Activated CD4-positive, alpha-beta T cell treated with anti-CD3 and anti-CD28 coated beads for 36 hours (primary cell): ENCODE measurements at regions of chr9 and their contacts with region 1.

Region 1: DNA sequence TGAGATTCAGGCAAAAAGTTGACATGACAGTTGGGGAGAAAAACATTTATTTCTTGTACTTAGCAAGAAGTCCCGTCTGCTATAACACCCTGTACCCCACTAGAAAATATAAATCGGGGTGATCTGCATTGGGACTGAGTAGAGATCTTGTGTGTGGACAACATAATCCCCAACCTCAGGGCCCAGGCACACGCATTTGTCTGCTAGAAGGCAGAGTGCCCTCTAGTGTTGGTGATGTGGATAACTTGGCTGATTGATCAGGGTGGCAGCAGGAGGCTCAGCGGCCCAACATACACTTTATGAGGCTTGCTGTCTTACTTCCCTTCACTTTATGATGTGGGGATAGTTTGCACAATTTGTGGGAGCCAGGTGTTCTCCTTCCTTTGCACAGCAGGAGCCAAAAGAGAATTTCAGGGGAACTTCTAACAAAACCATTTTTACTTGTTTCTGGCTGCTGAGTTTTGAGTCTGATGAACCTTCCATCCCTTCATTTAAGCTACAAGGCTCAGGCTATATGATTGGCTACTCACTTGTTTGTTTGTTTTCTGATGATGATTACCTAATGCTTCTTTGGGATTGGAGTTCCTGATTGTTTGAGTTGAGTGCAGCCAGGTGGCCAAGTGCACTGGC is 263.2 kb downstream of the DMAC1 start:
- DNase-seq: peak; percentile 69
- ATAC-seq: no peak
- H3K4me3 Mint-ChIP-seq: no peak overlapping the region
- H3K27ac Mint-ChIP-seq: no peak overlapping the region
- H3K4me1 Mint-ChIP-seq: peaks cover 14% of the 10 kb centered on the region
- H3K27me3 Mint-ChIP-seq: peaks cover 14% of the 10 kb centered on the region

Region 2: GRCh38 chr9:6827439-6827838 is 709.0 kb before region 1 on chr9:
- CTCF ChIA-PET with region 1: interaction called, 3 read pairs
- POLR2A ChIA-PET with region 1: no interaction called
- intact Hi-C with region 1: loop called in 1 of 2 experiments (anchors 2 kb)
- DNase-seq: peak; percentile 54
- ATAC-seq: peak; percentile 79
- H3K4me3 Mint-ChIP-seq: no peak overlapping the region
- H3K27ac Mint-ChIP-seq: peak overlapping the region; percentile 62
- H3K4me1 Mint-ChIP-seq: peaks cover 9% of the 10 kb centered on the region
- H3K27me3 Mint-ChIP-seq: no peaks in the 10 kb centered on the region

Region 3: GRCh38 chr9:6907772-6908381 is 628.5 kb before region 1 on chr9:
- CTCF ChIA-PET with region 1: no interaction called
- POLR2A ChIA-PET with region 1: no interaction called
- intact Hi-C with region 1: loop called in 1 of 2 experiments (anchors 10 kb)
- DNase-seq: no peak
- ATAC-seq: no peak
- H3K4me3 Mint-ChIP-seq: no peak overlapping the region
- H3K27ac Mint-ChIP-seq: no peak overlapping the region
- H3K4me1 Mint-ChIP-seq: peaks cover 4% of the 10 kb centered on the region
- H3K27me3 Mint-ChIP-seq: no peaks in the 10 kb centered on the region

Region 4: GRCh38 chr9:7055201-7055903 is 481.1 kb before region 1 on chr9:
- CTCF ChIA-PET with region 1: no interaction called
- POLR2A ChIA-PET with region 1: no interaction called
- intact Hi-C with region 1: loop called (anchors 1 to 5 kb)
- DNase-seq: no peak
- ATAC-seq: peak; percentile 30
- H3K4me3 Mint-ChIP-seq: no peak overlapping the region
- H3K27ac Mint-ChIP-seq: no peak overlapping the region
- H3K4me1 Mint-ChIP-seq: peaks cover 11% of the 10 kb centered on the region
- H3K27me3 Mint-ChIP-seq: no peaks in the 10 kb centered on the region

Region 5: GRCh38 chr9:7234143-7234542 is 302.3 kb before region 1 on chr9:
- CTCF ChIA-PET with region 1: interaction called, 3 read pairs
- POLR2A ChIA-PET with region 1: no interaction called
- intact Hi-C with region 1: loop called in 1 of 2 experiments (anchors 1 kb)
- DNase-seq: peak; percentile 76
- ATAC-seq: peak; percentile 96
- H3K4me3 Mint-ChIP-seq: no peak overlapping the region
- H3K27ac Mint-ChIP-seq: no peak overlapping the region
- H3K4me1 Mint-ChIP-seq: no peaks in the 10 kb centered on the region
- H3K27me3 Mint-ChIP-seq: peaks cover 12% of the 10 kb centered on the region

Region 6: GRCh38 chr9:7298123-7298522 is 238.3 kb before region 1 on chr9:
- CTCF ChIA-PET with region 1: no interaction called
- POLR2A ChIA-PET with region 1: no interaction called
- intact Hi-C with region 1: loop called (anchors 5 to 10 kb)
- DNase-seq: peak; percentile 76
- ATAC-seq: peak; percentile 95
- H3K4me3 Mint-ChIP-seq: no peak overlapping the region
- H3K27ac Mint-ChIP-seq: peak overlapping the region; percentile 7
- H3K4me1 Mint-ChIP-seq: peaks cover 20% of the 10 kb centered on the region
- H3K27me3 Mint-ChIP-seq: peaks cover 29% of the 10 kb centered on the region

Region 7: DNA sequence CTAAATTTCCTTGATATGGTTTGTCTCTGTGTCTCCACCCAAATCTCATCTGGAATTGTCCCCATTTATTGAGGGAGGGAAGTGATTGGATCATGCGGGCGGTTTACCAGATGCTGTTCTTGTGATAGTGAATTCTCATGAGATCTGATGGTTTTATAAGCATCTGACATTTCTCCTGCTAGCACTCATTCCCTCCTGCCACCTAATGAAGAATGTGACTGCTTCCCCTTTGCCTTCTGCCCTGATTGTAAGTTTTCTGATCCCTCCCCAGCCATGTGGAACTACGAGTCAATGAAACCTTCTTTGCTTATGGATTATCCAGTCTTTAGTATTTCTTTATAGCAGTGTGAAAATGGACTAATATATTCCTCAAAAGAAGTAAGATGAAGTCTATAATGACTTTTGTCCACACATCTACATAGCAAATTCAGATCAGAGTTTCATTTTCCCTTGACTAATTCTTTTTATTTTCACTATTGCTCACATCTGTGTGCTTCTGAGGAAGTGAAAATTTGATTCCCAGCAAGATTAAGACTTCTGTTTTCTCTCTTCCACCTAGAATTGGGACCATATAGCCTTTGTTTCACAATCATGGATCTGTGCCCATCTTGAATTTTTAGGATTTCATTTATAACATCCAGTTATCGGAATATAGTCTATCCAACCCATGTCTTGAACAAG is 130.4 kb before region 1 on chr9:
- CTCF ChIA-PET with region 1: interaction called, 12 read pairs
- POLR2A ChIA-PET with region 1: no interaction called
- intact Hi-C with region 1: loop called (anchors 1 to 5 kb)
- DNase-seq: no peak
- ATAC-seq: peak; percentile 39
- H3K4me3 Mint-ChIP-seq: no peak overlapping the region
- H3K27ac Mint-ChIP-seq: no peak overlapping the region
- H3K4me1 Mint-ChIP-seq: peaks cover 8% of the 10 kb centered on the region
- H3K27me3 Mint-ChIP-seq: peaks cover 19% of the 10 kb centered on the region

Region 8: GRCh38 chr9:8224381-8224801 is 688.0 kb after region 1 on chr9:
- CTCF ChIA-PET with region 1: no interaction called
- POLR2A ChIA-PET with region 1: no interaction called
- intact Hi-C with region 1: no loop called
- DNase-seq: no peak
- ATAC-seq: no peak
- H3K4me3 Mint-ChIP-seq: no peak overlapping the region
- H3K27ac Mint-ChIP-seq: no peak overlapping the region
- H3K4me1 Mint-ChIP-seq: no peaks in the 10 kb centered on the region
- H3K27me3 Mint-ChIP-seq: no peaks in the 10 kb centered on the region